ENCODE measurements at regions of chr12 and their contacts with region 1.

Region 1: DNA sequence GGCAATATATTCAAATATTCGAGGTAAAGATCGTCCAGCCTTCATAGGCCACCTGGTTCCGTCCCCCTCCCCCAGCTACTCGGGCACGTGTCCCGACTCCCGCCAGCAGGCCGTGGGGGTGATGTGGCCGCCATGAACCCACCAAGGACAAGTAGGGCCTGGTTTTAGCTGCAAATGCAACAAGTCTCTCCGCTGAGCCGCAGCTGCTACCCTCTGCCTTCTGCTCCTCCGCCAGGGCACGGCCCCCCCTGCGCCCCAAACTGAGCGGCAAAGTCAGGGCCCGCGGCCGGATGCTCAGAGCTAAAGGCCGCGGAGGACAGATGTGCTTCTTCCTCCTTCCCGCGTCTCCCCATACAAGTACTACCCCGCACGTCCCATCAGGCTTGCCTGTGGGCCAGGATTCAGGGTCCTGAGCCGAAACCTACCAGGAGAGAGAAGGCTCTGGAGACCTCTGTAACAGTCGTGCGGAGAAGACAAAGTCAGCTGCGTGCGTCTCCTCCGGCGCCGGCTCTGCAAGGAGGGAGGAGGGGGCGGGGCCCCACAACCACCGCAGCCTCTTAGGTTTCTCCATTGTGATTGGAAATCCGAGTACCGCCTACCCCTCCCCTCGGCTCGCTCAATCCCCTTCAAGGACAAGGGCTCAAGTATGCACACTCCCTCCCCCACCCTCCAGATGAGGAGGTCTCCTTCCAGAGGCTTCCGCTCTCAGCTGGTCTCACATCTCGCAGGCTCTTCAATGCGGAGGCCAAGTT is at the start of gene LDHB:
- DNase-seq: peak; percentile 90
- H3K4me3 Mint-ChIP-seq: peak within 1 kb of the TSS; percentile 95
- H3K27ac Mint-ChIP-seq: peak within 1 kb of the TSS; percentile 100
- H3K4me1 Mint-ChIP-seq: peaks cover 48% of the 10 kb centered on the region
- H3K27me3 Mint-ChIP-seq: peaks cover 2% of the 10 kb centered on the region
- total RNA-seq, gene LDHB: 1,359 and 1,451 TPM in 2 replicates

Region 2: DNA sequence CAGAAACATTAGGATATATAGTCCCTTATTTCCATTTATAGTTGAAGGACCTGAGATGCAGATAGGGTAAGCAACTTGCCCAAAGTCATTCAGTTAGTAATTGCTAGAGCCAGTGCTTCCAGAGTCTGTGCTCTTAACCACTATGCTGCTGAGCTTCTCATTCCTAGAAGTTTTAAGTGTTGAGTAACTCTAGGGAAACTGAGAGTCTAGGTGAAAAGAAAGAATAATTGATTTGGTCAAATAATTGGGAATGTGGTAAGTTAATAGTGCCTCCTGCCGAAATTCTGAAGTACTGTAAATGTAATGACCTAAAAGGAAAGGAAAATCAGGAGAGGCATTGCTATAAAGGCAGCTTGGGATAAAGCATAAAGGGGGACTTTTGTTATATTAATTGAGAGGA is 206.0 kb before region 1 on chr12:
- intact Hi-C with region 1: loop called (anchors 1 kb)
- DNase-seq: no peak
- H3K4me3 Mint-ChIP-seq: no peak overlapping the region
- H3K27ac Mint-ChIP-seq: no peak overlapping the region
- H3K4me1 Mint-ChIP-seq: peaks cover 50% of the 10 kb centered on the region
- H3K27me3 Mint-ChIP-seq: no peaks in the 10 kb centered on the region

Region 3: DNA sequence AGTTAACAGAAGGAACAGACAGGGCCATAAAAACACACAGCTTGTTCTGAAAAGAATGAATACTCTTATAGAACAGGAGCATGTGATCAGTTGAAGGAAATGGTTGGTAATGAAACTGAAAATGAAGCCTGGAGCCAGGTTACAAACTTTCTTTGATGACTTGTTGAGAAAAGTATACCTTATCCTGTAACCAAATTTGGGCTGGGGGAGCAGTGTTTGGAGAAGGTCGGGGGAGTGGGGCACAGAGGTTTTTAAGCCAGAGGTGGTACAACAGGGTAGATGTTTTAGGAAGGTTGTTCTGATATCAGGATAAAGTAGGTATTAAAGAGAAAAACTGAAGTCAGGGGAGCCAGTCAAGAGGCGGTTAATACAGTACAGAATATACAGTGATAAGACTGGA is 147.7 kb before region 1 on chr12:
- intact Hi-C with region 1: loop called (anchors 1 kb)
- DNase-seq: peak; percentile 33
- H3K4me3 Mint-ChIP-seq: peak overlapping the region; percentile 76
- H3K27ac Mint-ChIP-seq: peak overlapping the region; percentile 89
- H3K4me1 Mint-ChIP-seq: peaks cover 42% of the 10 kb centered on the region
- H3K27me3 Mint-ChIP-seq: no peaks in the 10 kb centered on the region

Region 4: DNA sequence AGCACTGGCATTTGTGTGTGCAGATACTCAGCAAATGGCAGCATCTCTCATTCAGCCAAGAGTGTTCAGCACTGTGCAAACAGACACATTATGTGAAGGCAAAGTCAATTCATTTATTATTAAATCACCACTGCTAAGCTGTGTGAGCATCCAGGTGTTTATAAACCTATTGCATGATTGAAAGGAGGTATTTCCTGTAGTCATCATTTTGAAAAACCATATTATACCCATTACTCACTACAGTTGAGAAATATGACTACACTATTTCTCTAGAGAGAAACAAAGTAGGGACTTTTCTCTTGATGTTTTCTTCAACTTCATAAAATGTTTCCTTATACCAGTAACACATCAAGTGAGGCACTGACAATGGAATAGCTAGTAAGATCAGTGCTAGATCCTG is 117.7 kb before region 1 on chr12:
- intact Hi-C with region 1: no loop called
- DNase-seq: no peak
- H3K4me3 Mint-ChIP-seq: no peak overlapping the region
- H3K27ac Mint-ChIP-seq: no peak overlapping the region
- H3K4me1 Mint-ChIP-seq: no peaks in the 10 kb centered on the region
- H3K27me3 Mint-ChIP-seq: no peaks in the 10 kb centered on the region

Region 5: DNA sequence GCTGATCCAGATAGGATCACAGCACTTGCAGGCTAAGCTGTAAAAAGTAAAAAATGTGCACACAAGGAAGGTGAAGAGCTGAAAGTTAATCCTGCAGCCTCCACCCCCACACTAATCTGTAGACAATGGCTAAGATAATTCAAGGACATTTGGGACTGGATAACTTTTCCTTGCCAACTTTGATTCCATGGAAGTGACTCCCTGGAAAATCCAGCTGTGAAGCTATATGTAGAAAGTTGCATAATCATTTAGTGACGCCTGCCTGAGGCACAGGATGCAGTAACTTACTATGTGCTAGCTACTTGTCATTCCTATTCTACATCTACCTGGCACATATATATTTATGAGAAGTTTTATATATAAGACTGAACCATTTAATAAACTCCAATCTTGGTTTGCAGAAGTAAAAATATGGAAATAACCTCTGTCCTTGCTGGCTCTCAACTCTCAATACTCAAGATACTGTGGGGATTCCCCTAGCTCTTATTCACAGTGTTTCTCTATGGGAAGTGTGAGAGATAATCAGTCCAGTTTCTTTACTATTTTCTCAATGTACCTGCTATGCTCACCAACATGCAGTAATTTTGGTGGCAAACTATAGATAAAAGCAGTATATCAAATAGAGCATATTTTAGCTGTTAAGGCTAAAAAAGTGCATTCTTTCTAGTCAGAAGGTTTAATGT is 14.7 kb before region 1 on chr12:
- intact Hi-C with region 1: loop called (anchors 1 kb)
- DNase-seq: no peak
- H3K4me3 Mint-ChIP-seq: no peak overlapping the region
- H3K27ac Mint-ChIP-seq: peak overlapping the region; percentile 21
- H3K4me1 Mint-ChIP-seq: peaks cover 65% of the 10 kb centered on the region
- H3K27me3 Mint-ChIP-seq: no peaks in the 10 kb centered on the region

Region 6: DNA sequence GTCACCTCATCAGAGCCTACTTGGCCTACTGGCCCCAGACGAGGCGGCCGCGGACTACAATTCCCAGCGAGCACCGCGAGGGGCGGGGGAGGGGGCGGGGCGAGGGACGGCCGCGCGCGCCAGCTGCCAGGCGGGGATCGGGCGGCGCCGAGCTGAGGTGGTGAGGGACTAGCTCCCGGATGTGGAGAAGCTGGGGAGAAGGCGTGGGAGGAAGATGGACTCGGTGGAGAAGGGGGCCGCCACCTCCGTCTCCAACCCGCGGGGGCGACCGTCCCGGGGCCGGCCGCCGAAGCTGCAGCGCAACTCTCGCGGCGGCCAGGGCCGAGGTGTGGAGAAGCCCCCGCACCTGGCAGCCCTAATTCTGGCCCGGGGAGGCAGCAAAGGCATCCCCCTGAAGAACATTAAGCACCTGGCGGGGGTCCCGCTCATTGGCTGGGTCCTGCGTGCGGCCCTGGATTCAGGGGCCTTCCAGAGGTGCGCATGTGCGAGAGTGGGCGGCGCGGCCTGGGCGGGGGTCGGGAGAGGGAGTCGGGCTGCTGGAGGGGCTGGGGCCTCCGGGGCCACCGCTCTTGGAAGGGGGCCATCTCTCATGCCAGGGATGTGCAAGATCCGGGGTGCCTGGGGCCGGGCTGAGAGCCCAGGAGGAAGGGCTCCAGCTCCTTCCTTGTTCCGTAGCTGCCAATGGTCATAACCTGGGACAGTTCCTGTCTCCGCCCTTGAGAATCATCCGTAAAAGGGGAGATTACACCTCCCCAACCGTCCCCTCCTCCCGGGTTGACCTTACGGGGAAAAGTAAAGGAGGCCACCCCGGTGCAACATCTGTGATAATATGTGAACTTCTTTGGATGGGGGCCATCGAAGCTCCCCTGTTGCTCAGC is 388.8 kb after region 1 on chr12 and contains the start of gene CMAS:
- intact Hi-C with region 1: loop called (anchors 5 kb)
- DNase-seq: peak; percentile 70
- H3K4me3 Mint-ChIP-seq: peak within 1 kb of the TSS; percentile 95
- H3K27ac Mint-ChIP-seq: peak within 1 kb of the TSS; percentile 88
- H3K4me1 Mint-ChIP-seq: peaks cover 48% of the 10 kb centered on the region
- H3K27me3 Mint-ChIP-seq: no peaks in the 10 kb centered on the region
- total RNA-seq, gene CMAS: 34.1 and 34.9 TPM in 2 replicates

Region 7: GRCh38 chr12:22658214-22658613 is 1000.7 kb after region 1 on chr12:
- intact Hi-C with region 1: loop called (anchors 10 kb)
- DNase-seq: no peak
- H3K4me3 Mint-ChIP-seq: no peak overlapping the region
- H3K27ac Mint-ChIP-seq: peak overlapping the region; percentile 5
- H3K4me1 Mint-ChIP-seq: peaks cover 16% of the 10 kb centered on the region
- H3K27me3 Mint-ChIP-seq: no peaks in the 10 kb centered on the region